ENCODE measurements at regions of chr15 and their contacts with region 1.

Region 1: DNA sequence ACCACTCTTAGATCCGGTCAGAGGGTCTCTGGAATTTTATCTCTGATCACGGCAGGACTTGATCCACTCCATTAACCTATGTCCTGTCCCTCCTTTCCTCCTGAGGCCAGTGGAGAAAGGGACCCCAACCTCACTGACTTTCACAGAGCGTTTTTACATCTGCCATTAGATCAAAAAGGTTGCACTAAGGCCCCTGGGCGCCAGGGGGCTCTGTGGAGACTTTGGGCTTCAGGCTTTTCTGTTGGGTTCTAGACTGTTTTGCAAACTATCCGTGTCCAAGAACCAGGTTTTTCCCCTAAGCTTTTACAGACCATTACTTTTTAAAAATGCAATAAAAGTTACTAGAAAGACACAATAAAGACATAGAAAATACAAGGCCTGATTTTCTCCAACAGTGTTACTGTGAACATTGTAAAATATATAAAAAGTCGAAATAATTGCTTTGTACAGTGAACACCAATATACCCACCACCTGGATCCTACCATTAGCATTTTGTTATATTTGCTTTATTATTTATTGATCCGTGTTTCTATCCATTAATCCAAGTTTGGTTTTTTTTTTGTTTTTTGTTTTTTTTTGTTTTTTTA is 159.7 kb downstream of the POLR2M start:
- DNase-seq: peak; percentile 76
- H3K4me3 ChIP-seq: no peak overlapping the region
- H3K27ac ChIP-seq: no peak overlapping the region
- H3K4me1 ChIP-seq: peaks cover 0 to 10% (median 5%) of the 10 kb centered on the region in 4 donors
- H3K27me3 ChIP-seq: peaks cover 8% of the 10 kb centered on the region
- CTCF ChIP-seq: peak; percentile 64 to 73 (median 69)
- EP300 ChIP-seq: no peak
- POLR2A ChIP-seq: no peak

Region 2: DNA sequence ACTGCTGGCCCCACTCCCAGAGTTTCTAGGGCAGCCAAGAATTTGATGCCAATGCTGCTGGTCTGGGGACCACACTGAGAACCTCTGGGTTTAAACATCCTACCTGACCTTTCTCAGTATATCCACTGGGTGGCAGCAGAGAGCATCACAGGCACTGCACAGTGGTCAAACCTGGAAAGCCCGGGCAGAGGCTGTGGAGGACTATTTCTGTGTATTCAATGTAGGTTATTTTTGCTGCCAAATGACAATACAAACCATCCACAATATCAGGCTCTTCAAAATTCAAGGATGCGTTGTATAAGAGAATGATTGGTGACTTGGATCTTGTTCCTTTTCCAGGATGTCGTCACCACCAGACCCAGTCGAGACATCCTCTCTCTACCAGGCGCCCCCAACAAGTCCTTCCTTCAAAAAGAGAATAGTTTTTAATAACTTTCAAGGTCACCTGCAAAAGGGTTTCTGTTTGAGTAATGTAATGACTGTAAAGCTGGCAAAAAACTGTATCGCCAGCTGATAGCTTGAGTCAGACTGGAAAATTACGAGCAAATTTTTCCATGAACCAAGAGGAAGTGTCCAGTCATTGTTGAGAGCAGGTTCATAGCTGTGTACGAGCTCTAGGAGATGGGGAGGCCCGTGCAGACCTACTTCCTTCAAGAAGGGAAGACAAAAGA is 305.1 kb before region 1 on chr15:
- in situ Hi-C with region 1: loop called in 3 of 4 experiments (anchors 10 to 25 kb)
- intact Hi-C with region 1: loop called (anchors 5 kb)
- DNase-seq: peak; percentile 76
- H3K4me3 ChIP-seq: no peak overlapping the region
- H3K27ac ChIP-seq: peak overlapping the region in 1 of 4 donors; percentile 46
- H3K4me1 ChIP-seq: peaks cover 10 to 28% (median 19%) of the 10 kb centered on the region in 4 donors
- H3K27me3 ChIP-seq: no peaks in the 10 kb centered on the region
- CTCF ChIP-seq: peak; percentile 86 to 95 (median 92)
- EP300 ChIP-seq: no peak
- POLR2A ChIP-seq: no peak

Region 3: GRCh38 chr15:57667171-57667849 is 198.9 kb before region 1 on chr15:
- in situ Hi-C with region 1: loop called in 2 of 4 experiments (anchors 25 kb)
- intact Hi-C with region 1: no loop called
- DNase-seq: no peak
- H3K4me3 ChIP-seq: no peak overlapping the region
- H3K27ac ChIP-seq: peak overlapping the region; percentile 24 to 54 (median 38)
- H3K4me1 ChIP-seq: peaks cover 0 to 32% (median 23%) of the 10 kb centered on the region in 4 donors
- H3K27me3 ChIP-seq: peaks cover 6% of the 10 kb centered on the region
- CTCF ChIP-seq: peak; percentile 17 to 33 (median 22)
- EP300 ChIP-seq: no peak
- POLR2A ChIP-seq: no peak

Region 4: DNA sequence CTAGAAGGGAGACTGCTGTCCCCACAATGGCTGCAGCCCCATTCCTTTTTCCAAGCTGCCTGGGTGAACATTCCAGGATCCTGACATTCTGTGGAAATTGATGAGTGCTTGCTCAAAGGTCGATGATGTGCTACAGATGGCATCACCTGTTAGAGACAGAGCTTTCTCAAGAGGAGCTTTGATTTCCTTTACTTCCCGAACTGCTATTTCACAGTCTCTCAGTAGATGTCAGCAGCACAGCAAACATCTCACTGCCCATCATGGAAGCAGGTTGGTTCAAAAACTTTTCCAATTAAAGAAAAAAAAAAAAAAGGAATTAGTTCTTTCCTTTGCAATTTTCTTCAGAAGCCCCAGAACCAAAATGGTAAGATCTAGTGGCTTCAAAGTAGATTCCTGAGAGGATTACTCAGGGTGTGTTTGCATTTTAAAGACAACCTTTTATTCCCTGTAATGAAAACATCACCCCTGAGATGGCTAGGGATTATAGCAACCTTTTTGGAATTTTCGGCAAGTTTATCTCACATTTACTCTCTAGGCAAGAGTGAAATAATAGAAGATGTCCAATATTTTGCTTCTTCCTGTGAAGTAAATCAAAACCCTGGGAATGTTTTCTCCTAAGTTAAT is 115.0 kb before region 1 on chr15:
- in situ Hi-C with region 1: no loop called
- intact Hi-C with region 1: loop called (anchors 10 kb)
- DNase-seq: no peak
- H3K4me3 ChIP-seq: no peak overlapping the region
- H3K27ac ChIP-seq: no peak overlapping the region
- H3K4me1 ChIP-seq: peaks cover 0 to 5% (median 0%) of the 10 kb centered on the region in 4 donors
- H3K27me3 ChIP-seq: no peaks in the 10 kb centered on the region
- CTCF ChIP-seq: peak; percentile 33 to 53 (median 45)
- EP300 ChIP-seq: no peak
- POLR2A ChIP-seq: no peak

Measured in transverse colon (tissue), 4 donors.